Left cardiac atrium (tissue), 4 donors: ENCODE measurements at regions of chr3 and their contacts with region 1.

Region 1: DNA sequence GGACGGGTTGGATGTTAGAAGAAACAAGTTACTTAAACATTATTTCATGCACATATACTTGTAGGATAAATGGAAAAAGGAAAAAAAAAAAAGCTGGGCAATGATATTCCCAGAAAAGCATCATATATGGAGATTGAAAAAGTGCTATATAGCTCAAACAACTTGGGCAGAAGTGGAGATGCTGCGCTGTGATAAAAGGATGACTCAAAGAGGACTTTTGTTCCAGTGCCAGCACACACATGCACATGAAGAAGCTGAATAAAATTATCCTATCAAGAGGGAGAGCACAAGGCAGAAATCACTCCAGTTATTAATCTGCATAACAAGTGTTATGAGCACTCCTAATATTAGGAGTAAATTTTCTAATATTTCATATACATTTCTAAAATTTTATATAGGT is 30.9 kb downstream of the FRMD4B start:
- DNase-seq: no peak
- ATAC-seq: no peak

Region 2: DNA sequence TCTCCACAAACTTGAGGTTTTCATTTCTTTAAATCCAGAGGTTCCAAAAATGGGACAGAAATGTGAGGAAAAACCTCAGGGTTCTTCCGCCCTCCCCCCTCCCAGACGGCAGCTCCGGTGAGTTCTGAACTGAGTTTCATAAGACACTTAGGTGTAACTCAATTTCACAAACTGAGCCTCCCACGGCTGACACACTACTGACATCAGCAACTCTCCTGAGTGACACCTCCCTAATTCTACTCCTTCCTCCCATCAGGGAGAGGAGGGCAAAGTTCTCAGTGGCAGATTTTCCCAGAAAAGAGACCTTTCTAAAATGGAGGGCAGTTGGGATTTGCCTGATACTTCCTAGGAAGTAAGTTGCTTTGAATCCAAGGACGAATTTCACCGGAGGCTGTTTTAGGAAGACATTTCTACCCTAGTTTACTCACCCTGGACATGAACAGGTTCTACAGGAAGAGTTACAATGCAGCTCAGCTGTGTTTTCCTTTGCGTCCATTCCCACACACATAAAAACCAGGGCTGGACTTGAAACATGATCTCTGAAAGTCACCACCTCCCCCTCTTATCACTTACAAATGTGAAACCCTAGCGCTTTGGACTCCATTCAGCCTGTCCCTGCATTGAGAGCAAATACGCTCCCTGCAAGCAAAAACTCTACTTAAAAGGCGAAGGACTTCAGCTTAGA is 154.4 kb before region 1 on chr3:
- intact Hi-C with region 1: no loop called
- DNase-seq: peak; percentile 37
- ATAC-seq: peak; percentile 76 to 86

Region 3: DNA sequence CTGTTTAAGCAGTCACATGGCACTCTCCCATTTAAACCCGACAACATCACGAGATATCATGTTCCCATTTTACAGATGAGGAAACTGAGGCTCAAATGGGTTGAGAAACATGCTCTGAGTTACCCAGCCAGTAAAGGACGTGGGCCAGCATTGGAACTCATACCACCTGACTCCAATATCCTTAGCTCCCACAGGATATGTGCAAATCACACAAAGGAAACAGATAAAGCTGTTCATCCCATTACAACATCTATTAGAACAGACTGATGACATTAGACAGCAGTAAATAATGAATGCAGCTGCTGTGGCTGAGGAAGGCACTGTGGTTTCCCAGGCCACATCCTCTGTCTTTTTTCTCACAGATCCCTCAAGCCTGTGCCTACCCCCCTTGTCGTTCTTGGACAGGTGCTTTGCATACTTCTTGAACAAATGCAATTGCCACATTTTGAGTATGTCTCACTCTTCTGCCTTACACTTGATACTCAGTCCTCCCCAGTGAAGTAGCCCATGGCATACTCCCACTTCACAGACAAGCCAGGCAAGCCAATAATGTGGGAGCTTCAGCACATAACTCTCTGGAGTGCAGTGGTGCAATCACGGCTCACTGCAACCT is 13.3 kb after region 1 on chr3:
- intact Hi-C with region 1: loop called in 1 of 2 experiments (anchors 1 kb)
- DNase-seq: no peak
- ATAC-seq: peak in 1 of 2 donors; percentile 11